K562 (cell line): ENCODE measurements at regions of chr2 and their contacts with region 1.

Region 1: GRCh38 chr2:167943897-167944296 is 303.5 kb downstream of the STK39 start:
- DNase-seq: no peak
- ATAC-seq: no peak
- H3K4me3 ChIP-seq: no peak overlapping the region
- H3K27ac ChIP-seq: peak overlapping the region; percentile 86
- H3K4me1 ChIP-seq: peaks cover 3 to 48% of the 10 kb centered on the region in 2 experiments; a peak in 3 of 5 replicates
- H3K27me3 ChIP-seq: no peaks in the 10 kb centered on the region
- CTCF ChIP-seq: no peak
- EP300 ChIP-seq: no peak
- POLR2A ChIP-seq: no peak
- RAD21 ChIP-seq: no peak

Region 2: DNA sequence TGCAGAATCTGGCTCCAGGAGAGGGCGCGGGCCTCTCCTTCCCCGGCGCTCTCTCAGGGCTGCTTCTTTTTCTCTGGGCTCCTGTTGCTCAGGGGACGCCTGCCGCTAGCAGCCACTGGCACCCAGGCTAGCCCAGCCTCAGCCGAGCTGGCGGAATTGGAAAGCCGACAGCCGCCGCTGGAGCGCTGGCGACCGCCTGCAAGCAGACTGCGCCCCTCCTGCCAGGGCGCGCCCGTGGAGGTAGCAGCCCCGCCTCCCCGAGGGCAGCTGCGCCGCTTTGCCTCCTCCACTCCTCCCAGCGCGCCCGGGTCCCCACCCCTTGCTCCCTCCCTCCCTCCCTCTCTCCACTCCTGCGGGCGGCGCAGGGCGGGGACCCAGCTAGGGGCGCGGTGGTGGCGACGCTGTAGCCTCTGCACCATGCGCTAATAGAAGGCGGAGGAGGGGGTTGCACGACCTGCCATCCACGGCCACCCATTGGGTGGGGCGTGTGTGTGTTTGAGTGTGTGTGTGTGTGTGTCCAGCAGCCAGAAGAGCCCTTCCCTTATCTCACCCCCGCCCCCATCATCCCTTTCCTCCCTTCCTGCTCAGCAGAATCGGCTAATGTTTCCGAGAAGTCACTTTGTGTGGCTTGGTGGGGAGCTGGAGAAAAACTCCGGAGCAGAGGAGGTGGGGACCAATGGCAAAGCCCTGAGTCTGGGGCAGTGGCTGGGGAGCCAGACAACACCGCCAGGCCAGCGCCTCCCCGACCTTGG is 1568.0 kb before region 1 on chr2 and contains the start of gene SCN9A:
- CTCF ChIA-PET with region 1: no interaction called
- POLR2A ChIA-PET with region 1: no interaction called
- in situ Hi-C with region 1: no loop called
- intact Hi-C with region 1: loop called (anchors 10 kb)
- DNase-seq: peak; percentile 90 to 98 (median 93)
- ATAC-seq: peak; percentile 92
- H3K4me3 ChIP-seq: peak within 1 kb of the TSS; percentile 62
- H3K27ac ChIP-seq: peak within 1 kb of the TSS; percentile 83
- H3K4me1 ChIP-seq: peaks cover 4 to 27% of the 10 kb centered on the region in 2 experiments; a peak in 4 of 5 replicates
- H3K27me3 ChIP-seq: no peaks in the 10 kb centered on the region
- CTCF ChIP-seq: peak; percentile 36 to 40 (median 36); a peak in 5 of 6 replicates
- EP300 ChIP-seq: peak; percentile 92
- POLR2A ChIP-seq: peak; percentile 78
- RAD21 ChIP-seq: peak in 1 of 2 experiments; percentile 31; a peak in 2 of 4 replicates
- polyA plus RNA-seq, gene SCN9A: 1.4 to 1.5 TPM

Region 3: GRCh38 chr2:167692191-167692590 is 251.7 kb before region 1 on chr2:
- CTCF ChIA-PET with region 1: no interaction called
- POLR2A ChIA-PET with region 1: no interaction called
- in situ Hi-C with region 1: no loop called
- intact Hi-C with region 1: no loop called
- DNase-seq: no peak
- ATAC-seq: no peak
- H3K4me3 ChIP-seq: no peak overlapping the region
- H3K27ac ChIP-seq: no peak overlapping the region
- H3K4me1 ChIP-seq: no peaks in the 10 kb centered on the region
- H3K27me3 ChIP-seq: no peaks in the 10 kb centered on the region
- CTCF ChIP-seq: no peak
- EP300 ChIP-seq: no peak
- POLR2A ChIP-seq: no peak
- RAD21 ChIP-seq: no peak

Region 4: DNA sequence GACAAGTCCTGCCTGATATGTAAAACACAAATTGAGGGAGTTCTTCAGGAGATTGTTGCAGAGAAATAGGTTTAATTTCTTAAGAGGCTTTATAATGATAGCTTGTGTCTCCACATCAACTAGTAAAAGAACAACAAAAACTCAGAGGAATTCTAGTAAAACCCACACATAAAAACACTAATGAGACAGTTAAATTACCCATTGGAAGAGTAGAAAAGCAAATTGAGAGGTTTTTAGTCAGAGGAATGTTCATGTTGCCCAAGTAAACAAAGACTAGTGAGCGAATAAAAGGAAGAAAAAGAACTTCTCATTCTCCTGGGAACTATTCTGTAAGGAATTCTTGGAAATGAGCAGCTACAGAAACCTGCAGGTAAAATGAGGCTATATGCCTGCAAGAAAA is 27.1 kb before region 1 on chr2:
- CTCF ChIA-PET with region 1: no interaction called
- POLR2A ChIA-PET with region 1: interaction called, 94 read pairs
- in situ Hi-C with region 1: no loop called
- intact Hi-C with region 1: no loop called
- DNase-seq: no peak
- ATAC-seq: no peak
- H3K4me3 ChIP-seq: no peak overlapping the region
- H3K27ac ChIP-seq: no peak overlapping the region
- H3K4me1 ChIP-seq: no peaks in the 10 kb centered on the region
- H3K27me3 ChIP-seq: no peaks in the 10 kb centered on the region
- CTCF ChIP-seq: no peak
- EP300 ChIP-seq: no peak
- POLR2A ChIP-seq: no peak
- RAD21 ChIP-seq: no peak

Region 5: GRCh38 chr2:167954495-167954894 is 10.6 kb after region 1 on chr2:
- CTCF ChIA-PET with region 1: no interaction called
- POLR2A ChIA-PET with region 1: interaction called, 66 read pairs
- in situ Hi-C with region 1: no loop called
- intact Hi-C with region 1: no loop called
- DNase-seq: no peak
- ATAC-seq: no peak
- H3K4me3 ChIP-seq: no peak overlapping the region
- H3K27ac ChIP-seq: no peak overlapping the region
- H3K4me1 ChIP-seq: peaks cover 0 to 12% of the 10 kb centered on the region in 2 experiments; a peak in 4 of 5 replicates
- H3K27me3 ChIP-seq: no peaks in the 10 kb centered on the region; a peak in 1 of 5 replicates
- CTCF ChIP-seq: no peak
- EP300 ChIP-seq: no peak
- POLR2A ChIP-seq: no peak
- RAD21 ChIP-seq: no peak

Region 6: DNA sequence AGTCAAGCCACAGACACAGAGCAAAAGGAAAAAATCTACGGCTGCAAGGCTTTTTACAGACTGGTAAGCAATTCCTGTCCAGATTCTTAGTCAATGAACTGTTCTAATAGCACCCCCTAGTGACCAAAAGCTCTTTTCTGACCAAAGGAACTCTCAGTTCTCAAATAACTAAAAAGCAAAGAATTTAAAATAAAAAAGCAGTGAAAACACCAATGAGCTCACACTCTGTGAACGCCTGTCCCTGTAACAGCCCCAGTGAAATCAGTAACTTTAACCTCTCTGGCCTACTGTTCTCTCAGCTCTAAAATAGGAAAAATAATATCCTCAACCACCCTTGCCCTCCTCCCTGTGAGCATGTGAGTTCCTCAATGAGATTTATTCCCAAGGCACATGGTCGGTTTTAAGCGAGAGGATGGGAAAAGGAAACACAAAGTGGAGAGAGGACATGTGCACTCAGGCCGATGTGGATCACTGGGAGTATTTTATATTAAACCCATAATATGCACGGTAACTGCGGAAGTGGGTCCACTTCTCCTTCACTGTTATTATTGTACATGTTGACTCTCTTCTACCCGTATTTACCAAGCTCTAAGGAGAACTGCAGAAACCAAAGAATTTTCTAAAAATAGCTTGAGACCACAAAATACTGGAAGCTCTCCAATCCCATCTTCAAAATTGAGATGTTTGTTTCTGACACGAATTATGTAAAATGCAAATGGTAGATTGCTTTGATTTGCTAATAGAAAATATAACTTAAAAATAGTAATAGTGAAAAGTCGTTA is 175.0 kb after region 1 on chr2:
- CTCF ChIA-PET with region 1: interaction called, 3 read pairs
- POLR2A ChIA-PET with region 1: interaction called, 4 read pairs
- in situ Hi-C with region 1: no loop called
- intact Hi-C with region 1: loop called (anchors 1 kb)
- DNase-seq: peak; percentile 32 to 76 (median 34)
- ATAC-seq: peak; percentile 94
- H3K4me3 ChIP-seq: no peak overlapping the region
- H3K27ac ChIP-seq: no peak overlapping the region
- H3K4me1 ChIP-seq: no peaks in the 10 kb centered on the region
- H3K27me3 ChIP-seq: 0 out of 5 replicates have a peak, but pooled peaks cover 0 to 3% of the 10 kb centered on the region in 2 experiments
- CTCF ChIP-seq: peak; percentile 54 to 87 (median 72); a peak in 4 of 6 replicates
- EP300 ChIP-seq: no peak
- POLR2A ChIP-seq: no peak
- RAD21 ChIP-seq: peak; percentile 88 to 90

Region 7: DNA sequence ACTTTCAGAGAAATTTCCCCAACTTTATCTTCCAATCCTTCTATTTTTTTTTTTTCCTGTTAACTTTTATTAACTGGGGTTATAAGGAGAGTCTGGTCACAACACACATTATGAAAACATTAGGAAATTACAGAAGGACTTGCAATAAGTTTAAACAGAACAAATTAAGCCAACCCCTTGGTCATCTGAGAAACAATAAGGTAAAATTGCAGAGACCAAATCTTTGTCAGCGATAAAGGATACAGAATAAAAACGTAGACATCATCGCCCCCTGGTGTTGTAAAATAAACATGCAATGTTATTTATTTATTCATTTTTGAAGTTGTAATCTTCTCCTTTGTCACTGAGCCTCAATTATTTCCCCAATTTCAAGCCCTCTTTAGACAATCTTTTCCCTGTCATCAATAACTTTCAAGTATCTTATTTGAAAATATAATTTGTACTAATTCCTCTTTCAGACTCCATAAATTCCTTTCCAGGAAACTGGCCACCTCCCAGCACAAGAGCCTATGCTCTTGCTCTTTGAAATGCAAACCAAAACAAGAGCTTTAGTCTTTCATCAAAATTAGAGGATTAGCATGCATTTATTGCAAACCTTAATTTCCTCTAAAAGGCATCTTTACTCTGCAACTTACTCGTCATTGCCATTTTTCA is 976.7 kb after region 1 on chr2:
- CTCF ChIA-PET with region 1: no interaction called
- POLR2A ChIA-PET with region 1: no interaction called
- in situ Hi-C with region 1: loop called (anchors 25 kb)
- intact Hi-C with region 1: no loop called
- DNase-seq: peak; percentile 38 to 79 (median 44)
- ATAC-seq: peak; percentile 84
- H3K4me3 ChIP-seq: no peak overlapping the region
- H3K27ac ChIP-seq: no peak overlapping the region
- H3K4me1 ChIP-seq: peaks cover 0 to 7% of the 10 kb centered on the region in 2 experiments; a peak in 1 of 5 replicates
- H3K27me3 ChIP-seq: no peaks in the 10 kb centered on the region
- CTCF ChIP-seq: peak; percentile 63 to 90 (median 67); a peak in 5 of 6 replicates
- EP300 ChIP-seq: no peak
- POLR2A ChIP-seq: no peak
- RAD21 ChIP-seq: peak; percentile 95 to 98